ENCODE measurements at regions of chr2 and their contacts with region 1.

Region 1: GRCh38 chr2:20661067-20661980 is 5.6 kb upstream of the GDF7 start:
- DNase-seq: peak; percentile 69 to 84
- H3K4me3 ChIP-seq: no peak overlapping the region
- H3K27ac ChIP-seq: no peak overlapping the region
- H3K4me1 ChIP-seq: peaks cover 3 to 15% (median 8%) of the 10 kb centered on the region in 4 experiments
- H3K27me3 ChIP-seq: peaks cover 39 to 50% (median 48%) of the 10 kb centered on the region in 4 experiments
- CTCF ChIP-seq: peak in 2 of 3 experiments; percentile 92 to 97; a peak in 3 of 4 replicates
- EP300 ChIP-seq: no peak
- POLR2A ChIP-seq: no peak
- RAD21 ChIP-seq: peak; percentile 96 to 97

Region 2: DNA sequence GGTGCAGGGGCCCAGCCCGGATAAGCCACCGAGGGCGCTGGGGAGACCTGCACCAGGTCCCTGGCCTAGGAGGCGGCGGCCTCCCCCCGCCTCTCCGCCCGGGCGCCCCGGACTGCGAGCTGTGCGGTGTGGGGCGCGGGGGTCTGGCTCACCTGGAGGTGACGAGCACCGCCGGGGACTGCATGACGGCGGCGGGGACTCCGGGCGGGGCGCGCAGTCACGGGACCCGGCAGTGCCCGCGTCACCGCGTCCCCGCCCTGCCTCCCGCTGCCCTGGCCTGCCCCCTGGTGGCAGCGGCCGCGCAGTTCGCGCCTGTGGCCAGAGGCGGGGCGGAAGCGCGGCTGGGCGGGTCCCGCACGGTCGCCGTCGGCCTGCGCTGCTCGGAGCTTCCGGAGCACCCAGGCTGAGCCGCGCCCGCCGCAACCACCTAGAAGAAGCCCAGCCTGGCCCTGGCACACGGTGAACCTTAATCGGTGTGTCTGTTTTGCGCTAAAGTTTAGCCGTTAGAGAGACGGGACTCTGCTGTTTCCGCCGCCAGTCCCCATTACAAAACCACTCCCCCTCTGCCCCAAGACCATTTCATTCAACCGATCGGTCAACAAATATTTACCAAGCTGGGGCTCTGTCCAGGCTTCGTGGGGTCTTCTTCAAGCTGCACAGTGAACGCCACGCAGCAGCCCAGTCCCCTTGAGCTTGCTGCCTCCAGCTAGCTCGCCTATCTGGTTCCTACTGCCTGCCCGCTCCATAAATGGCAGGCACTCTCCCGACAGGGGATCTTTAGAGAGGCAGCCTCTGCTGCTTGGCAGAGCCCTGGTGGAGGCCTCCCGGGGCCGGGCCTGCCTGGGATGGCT is 10.2 kb before region 1 on chr2 and contains the start of gene HS1BP3:
- CTCF ChIA-PET with region 1: interaction called, 35 read pairs
- POLR2A ChIA-PET with region 1: interaction called, 12 read pairs
- DNase-seq: peak in 1 of 2 experiments; percentile 91
- H3K4me3 ChIP-seq: peak within 1 kb of the TSS; percentile 47 to 68 (median 56)
- H3K27ac ChIP-seq: no peak within 1 kb of the TSS
- H3K4me1 ChIP-seq: peaks cover 0 to 11% (median 7%) of the 10 kb centered on the region in 4 experiments; a peak in 5 of 7 replicates
- H3K27me3 ChIP-seq: peaks cover 0 to 4% (median under 1%) of the 10 kb centered on the region in 4 experiments; a peak in 4 of 7 replicates
- CTCF ChIP-seq: peak in 2 of 3 experiments; percentile 87 to 92; a peak in 3 of 4 replicates
- EP300 ChIP-seq: peak in 1 of 2 experiments; percentile 60; a peak in 1 of 3 replicates
- POLR2A ChIP-seq: peak in 1 of 2 experiments; percentile 74; a peak in 2 of 3 replicates
- RAD21 ChIP-seq: peak; percentile 49 to 76
- total RNA-seq, gene HS1BP3: 11.1 and 11.2 TPM in 2 replicates

Region 3: DNA sequence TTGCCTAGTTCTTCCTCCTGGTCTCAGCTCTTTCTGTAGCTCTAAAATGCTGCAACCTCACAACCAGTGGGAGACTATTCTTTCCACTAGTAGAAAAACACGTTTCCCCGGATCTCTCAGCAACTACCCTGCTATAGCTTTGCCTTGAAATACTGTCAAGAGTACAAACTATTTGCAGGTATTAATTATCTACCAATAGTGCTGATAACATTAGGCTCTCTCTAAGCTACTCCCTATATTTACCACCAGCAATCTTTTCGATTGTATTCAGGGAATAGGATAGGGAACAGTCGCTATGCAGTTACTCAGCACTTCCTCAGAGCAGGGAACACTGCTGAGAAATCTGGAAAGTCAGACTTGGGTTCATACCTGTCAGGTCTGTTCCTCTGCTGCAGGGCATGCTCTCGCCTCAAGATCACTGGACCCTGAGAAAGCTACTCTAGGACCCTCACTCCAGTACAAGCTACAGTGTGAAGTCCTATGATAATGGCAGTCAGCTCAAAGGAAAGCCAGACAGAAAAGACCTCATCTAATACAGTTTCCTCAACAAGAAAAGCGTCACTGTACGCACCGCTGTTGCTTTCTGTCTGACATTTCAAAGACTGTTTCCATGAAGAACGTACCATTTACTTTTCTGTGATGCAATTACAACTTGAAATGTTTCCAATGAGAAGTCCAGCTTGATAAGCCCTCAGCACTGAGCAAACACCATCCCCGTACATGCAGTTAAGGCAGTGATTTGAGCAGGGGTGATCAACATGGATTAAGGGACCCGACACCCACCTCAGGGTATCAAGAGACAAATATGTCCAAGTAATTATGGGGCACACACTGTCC is 28.3 kb after region 1 on chr2:
- CTCF ChIA-PET with region 1: interaction called, 23 read pairs
- POLR2A ChIA-PET with region 1: no interaction called
- DNase-seq: no peak
- H3K4me3 ChIP-seq: no peak overlapping the region
- H3K27ac ChIP-seq: no peak overlapping the region
- H3K4me1 ChIP-seq: no peaks in the 10 kb centered on the region
- H3K27me3 ChIP-seq: no peaks in the 10 kb centered on the region
- CTCF ChIP-seq: no peak
- EP300 ChIP-seq: no peak
- POLR2A ChIP-seq: no peak
- RAD21 ChIP-seq: no peak

Region 4: GRCh38 chr2:20758997-20759396 is 97.7 kb after region 1 on chr2:
- CTCF ChIA-PET with region 1: interaction called, 17 read pairs
- POLR2A ChIA-PET with region 1: no interaction called
- DNase-seq: no peak
- H3K4me3 ChIP-seq: no peak overlapping the region
- H3K27ac ChIP-seq: no peak overlapping the region
- H3K4me1 ChIP-seq: peaks cover 0 to 2% (median 2%) of the 10 kb centered on the region in 4 experiments; a peak in 3 of 7 replicates
- H3K27me3 ChIP-seq: no peaks in the 10 kb centered on the region
- CTCF ChIP-seq: no peak
- EP300 ChIP-seq: no peak
- POLR2A ChIP-seq: no peak
- RAD21 ChIP-seq: no peak

Region 5: DNA sequence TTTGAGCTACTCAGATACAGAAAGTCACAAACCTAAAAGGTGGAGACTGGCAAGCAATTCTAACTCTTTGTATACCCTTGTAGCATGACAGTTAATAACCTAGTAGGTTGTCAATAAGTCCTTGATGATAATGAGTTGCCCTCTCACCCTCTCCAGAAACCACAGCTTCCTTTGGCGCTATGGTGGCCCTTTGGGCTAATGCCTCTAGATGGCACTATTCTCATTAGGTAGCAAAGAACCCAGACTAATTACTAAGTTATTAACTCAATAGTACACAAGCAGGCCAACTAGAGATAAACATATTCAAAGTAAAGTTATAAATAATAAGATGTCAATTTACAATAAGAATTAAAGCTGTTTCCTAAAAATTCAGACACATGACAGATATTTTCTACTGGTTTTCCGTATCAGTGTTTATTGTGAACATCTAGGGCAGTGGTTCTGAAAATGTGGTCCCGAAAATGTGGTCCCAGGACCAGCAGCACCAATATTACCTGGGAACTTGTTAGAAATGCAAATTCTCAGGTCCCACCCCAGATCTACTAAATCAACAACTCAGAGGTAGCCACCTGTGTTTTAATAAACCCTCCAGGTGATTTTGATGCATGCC is 120.4 kb after region 1 on chr2:
- CTCF ChIA-PET with region 1: interaction called, 19 read pairs
- POLR2A ChIA-PET with region 1: no interaction called
- DNase-seq: peak in 1 of 2 experiments; percentile 48
- H3K4me3 ChIP-seq: no peak overlapping the region
- H3K27ac ChIP-seq: no peak overlapping the region
- H3K4me1 ChIP-seq: no peaks in the 10 kb centered on the region
- H3K27me3 ChIP-seq: no peaks in the 10 kb centered on the region
- CTCF ChIP-seq: peak; percentile 25 to 73 (median 68)
- EP300 ChIP-seq: no peak
- POLR2A ChIP-seq: no peak
- RAD21 ChIP-seq: peak; percentile 75 to 81

Region 6: GRCh38 chr2:21165350-21165749 is 504.0 kb after region 1 on chr2:
- CTCF ChIA-PET with region 1: interaction called, 11 read pairs
- POLR2A ChIA-PET with region 1: no interaction called
- DNase-seq: no peak
- H3K4me3 ChIP-seq: no peak overlapping the region
- H3K27ac ChIP-seq: no peak overlapping the region
- H3K4me1 ChIP-seq: no peaks in the 10 kb centered on the region
- H3K27me3 ChIP-seq: no peaks in the 10 kb centered on the region
- CTCF ChIP-seq: no peak; a peak in 1 of 4 replicates
- EP300 ChIP-seq: no peak
- POLR2A ChIP-seq: no peak
- RAD21 ChIP-seq: peak in 1 of 2 experiments; percentile 42; a peak in 3 of 4 replicates

Measured in H1 (cell line).